ENCODE measurements at regions of chr6 and their contacts with region 1.

Region 1: DNA sequence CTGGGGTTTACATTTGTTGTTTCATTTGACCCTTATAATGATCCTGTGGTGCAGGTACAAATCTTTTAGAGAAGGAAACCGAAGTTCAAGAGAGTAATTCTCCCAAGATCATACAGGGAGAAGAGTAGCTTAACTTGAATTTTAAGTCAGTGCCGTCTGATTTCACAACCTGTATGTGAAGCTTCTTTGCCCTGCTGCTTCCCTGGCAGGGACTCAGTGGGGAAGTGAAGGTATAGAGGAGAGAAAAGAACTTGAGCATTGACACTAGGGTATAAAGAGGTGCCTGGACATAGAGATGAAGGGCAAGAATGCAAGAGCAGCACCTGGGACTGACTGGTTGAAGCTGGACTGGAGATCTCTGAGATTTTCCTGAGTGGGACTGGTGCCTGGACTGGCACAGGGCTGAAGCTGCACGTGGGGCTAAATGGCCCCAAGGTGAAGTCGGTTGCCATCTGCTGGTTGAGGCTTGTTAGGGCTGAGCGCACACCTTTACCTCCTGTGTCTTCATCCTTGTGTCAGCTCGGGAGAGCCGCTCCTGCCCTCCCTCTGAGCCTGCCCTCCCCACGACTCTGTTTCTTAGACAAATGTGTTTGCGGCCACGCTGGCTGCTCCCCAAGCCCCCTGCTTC is 41.8 kb downstream of the FARS2 start:
- DNase-seq: peak; percentile 74
- ATAC-seq: peak; percentile 64
- H3K4me3 Mint-ChIP-seq: peak overlapping the region; percentile 44
- H3K27ac Mint-ChIP-seq: peak overlapping the region; percentile 78
- H3K4me1 Mint-ChIP-seq: peaks cover 52% of the 10 kb centered on the region
- H3K27me3 Mint-ChIP-seq: no peaks in the 10 kb centered on the region
- CTCF ChIP-seq: peak; percentile 46

Region 2: GRCh38 chr6:5174244-5174643 is 128.9 kb before region 1 on chr6:
- CTCF ChIA-PET with region 1: interaction called, 11 read pairs
- POLR2A ChIA-PET with region 1: no interaction called
- intact Hi-C with region 1: no loop called
- DNase-seq: peak; percentile 85
- ATAC-seq: peak; percentile 97
- H3K4me3 Mint-ChIP-seq: peak overlapping the region; percentile 44
- H3K27ac Mint-ChIP-seq: peak overlapping the region; percentile 79
- H3K4me1 Mint-ChIP-seq: peaks cover 49% of the 10 kb centered on the region
- H3K27me3 Mint-ChIP-seq: no peaks in the 10 kb centered on the region
- CTCF ChIP-seq: no peak

Region 3: GRCh38 chr6:5260661-5261544 is 42.2 kb before region 1 on chr6 and contains the starts of genes FARS2 and LYRM4:
- CTCF ChIA-PET with region 1: interaction called, 11 read pairs
- POLR2A ChIA-PET with region 1: interaction called, 11 read pairs
- intact Hi-C with region 1: no loop called
- DNase-seq: peak; percentile 90
- ATAC-seq: peak; percentile 85
- H3K4me3 Mint-ChIP-seq: peak within 1 kb of the TSS; percentile 87
- H3K27ac Mint-ChIP-seq: peak within 1 kb of the TSS; percentile 100
- H3K4me1 Mint-ChIP-seq: peaks cover 37% of the 10 kb centered on the region
- H3K27me3 Mint-ChIP-seq: no peaks in the 10 kb centered on the region
- CTCF ChIP-seq: no peak
- total RNA-seq, gene FARS2: 15.7 to 18.5 TPM
- total RNA-seq, gene LYRM4: 43.5 to 50.6 TPM

Region 4: GRCh38 chr6:5266423-5266822 is 36.7 kb before region 1 on chr6:
- CTCF ChIA-PET with region 1: interaction called, 11 read pairs
- POLR2A ChIA-PET with region 1: interaction called, 11 read pairs
- intact Hi-C with region 1: no loop called
- DNase-seq: no peak
- ATAC-seq: no peak
- H3K4me3 Mint-ChIP-seq: no peak overlapping the region
- H3K27ac Mint-ChIP-seq: no peak overlapping the region
- H3K4me1 Mint-ChIP-seq: peaks cover 36% of the 10 kb centered on the region
- H3K27me3 Mint-ChIP-seq: no peaks in the 10 kb centered on the region
- CTCF ChIP-seq: no peak

Region 5: DNA sequence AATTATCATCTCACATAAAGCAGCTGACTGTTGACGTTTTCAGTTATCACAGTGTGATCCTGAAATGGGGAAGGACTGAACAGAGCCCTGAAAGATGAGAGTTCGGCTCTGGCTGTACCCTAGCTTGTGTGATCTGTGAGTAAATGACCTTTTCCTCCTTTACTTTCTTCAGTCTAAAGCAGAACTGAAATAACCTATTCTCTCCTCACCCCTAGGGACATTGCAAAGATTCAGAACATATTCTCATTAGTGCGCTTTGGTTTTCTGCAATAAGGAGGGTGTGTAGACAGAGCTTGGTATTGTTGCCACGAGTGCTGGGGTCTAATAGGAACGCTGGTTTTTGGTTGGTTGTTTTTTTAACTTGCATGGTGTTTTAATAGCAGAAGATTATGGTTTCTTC is 25.1 kb before region 1 on chr6:
- CTCF ChIA-PET with region 1: interaction called, 8 read pairs
- POLR2A ChIA-PET with region 1: interaction called, 10 read pairs
- intact Hi-C with region 1: no loop called
- DNase-seq: no peak
- ATAC-seq: no peak
- H3K4me3 Mint-ChIP-seq: no peak overlapping the region
- H3K27ac Mint-ChIP-seq: no peak overlapping the region
- H3K4me1 Mint-ChIP-seq: peaks cover 42% of the 10 kb centered on the region
- H3K27me3 Mint-ChIP-seq: no peaks in the 10 kb centered on the region
- CTCF ChIP-seq: no peak

Region 6: GRCh38 chr6:5285081-5285480 is 18.0 kb before region 1 on chr6:
- CTCF ChIA-PET with region 1: interaction called, 14 read pairs
- POLR2A ChIA-PET with region 1: interaction called, 10 read pairs
- intact Hi-C with region 1: no loop called
- DNase-seq: no peak
- ATAC-seq: no peak
- H3K4me3 Mint-ChIP-seq: no peak overlapping the region
- H3K27ac Mint-ChIP-seq: no peak overlapping the region
- H3K4me1 Mint-ChIP-seq: peaks cover 41% of the 10 kb centered on the region
- H3K27me3 Mint-ChIP-seq: no peaks in the 10 kb centered on the region
- CTCF ChIP-seq: no peak

Region 7: GRCh38 chr6:5292154-5292553 is 11.0 kb before region 1 on chr6:
- CTCF ChIA-PET with region 1: interaction called, 14 read pairs
- POLR2A ChIA-PET with region 1: interaction called, 3 read pairs
- intact Hi-C with region 1: no loop called
- DNase-seq: no peak
- ATAC-seq: no peak
- H3K4me3 Mint-ChIP-seq: no peak overlapping the region
- H3K27ac Mint-ChIP-seq: no peak overlapping the region
- H3K4me1 Mint-ChIP-seq: peaks cover 48% of the 10 kb centered on the region
- H3K27me3 Mint-ChIP-seq: no peaks in the 10 kb centered on the region
- CTCF ChIP-seq: no peak

Region 8: DNA sequence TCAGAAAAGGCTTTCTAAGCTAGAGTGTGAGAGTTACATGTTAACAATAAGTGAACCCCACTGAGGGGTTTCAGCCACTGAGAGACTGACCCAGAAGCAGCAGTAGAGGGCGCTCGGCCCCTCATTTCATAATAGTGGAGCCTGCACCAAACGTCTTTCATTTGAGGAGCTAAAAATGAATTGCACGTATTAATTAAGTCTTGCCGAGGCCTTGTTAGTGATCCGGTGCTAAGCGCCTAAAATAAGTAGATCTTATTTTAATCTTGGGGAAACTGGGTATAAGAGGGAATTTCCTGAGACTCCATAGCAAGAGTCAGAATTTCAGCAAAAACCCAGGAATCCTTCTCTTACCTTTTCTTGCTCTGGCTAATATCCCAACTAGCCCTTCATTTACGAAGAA is 167.9 kb after region 1 on chr6:
- CTCF ChIA-PET with region 1: no interaction called
- POLR2A ChIA-PET with region 1: no interaction called
- intact Hi-C with region 1: no loop called
- DNase-seq: peak; percentile 84
- ATAC-seq: peak; percentile 84
- H3K4me3 Mint-ChIP-seq: no peak overlapping the region
- H3K27ac Mint-ChIP-seq: no peak overlapping the region
- H3K4me1 Mint-ChIP-seq: peaks cover 3% of the 10 kb centered on the region
- H3K27me3 Mint-ChIP-seq: no peaks in the 10 kb centered on the region
- CTCF ChIP-seq: peak; percentile 85

Measured in activated CD8-positive, alpha-beta T cell treated with anti-CD3 and anti-CD28 coated beads for 36 hours (primary cell).